Common myeloid progenitor, CD34-positive (primary cell): ENCODE measurements at regions of chr5 and their contacts with region 1.

Region 1: DNA sequence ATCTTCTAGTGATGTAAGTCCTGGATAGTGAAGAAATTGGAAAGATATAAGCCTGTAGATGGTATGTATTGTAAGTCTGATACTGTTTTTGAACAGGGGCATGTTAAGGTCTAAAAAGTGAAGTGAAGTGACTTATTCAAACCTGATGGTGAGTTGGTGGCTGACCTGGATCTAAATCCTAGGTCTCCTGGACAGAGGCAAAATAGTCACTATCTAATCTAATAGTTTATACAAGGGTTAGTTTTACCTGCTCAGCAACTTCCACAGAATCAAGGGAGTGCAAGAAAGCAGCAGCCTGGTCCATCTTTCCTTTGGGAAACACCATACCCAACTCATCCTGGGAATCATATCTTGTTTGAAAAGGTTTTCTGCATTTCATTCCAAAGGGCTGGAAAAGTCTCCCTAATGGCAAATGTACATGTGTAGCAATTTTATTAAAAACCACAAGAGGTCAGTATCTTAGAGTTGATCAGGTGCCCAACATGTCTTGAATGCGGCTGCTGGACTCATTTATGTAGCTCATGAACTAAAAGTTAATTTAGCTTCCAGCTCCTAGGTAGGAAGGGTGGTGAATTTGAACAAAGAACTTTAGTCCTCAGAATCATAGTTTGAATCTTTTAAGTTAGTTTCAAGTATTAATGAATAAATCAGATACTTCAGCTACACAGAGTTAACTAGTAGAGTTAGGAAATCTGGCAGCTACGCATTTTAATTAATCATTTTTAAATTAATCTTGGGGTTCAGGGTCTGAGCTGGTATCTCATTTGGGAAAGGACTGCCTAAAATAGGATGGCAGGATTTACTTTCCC is 26.0 kb downstream of the SKP2 start:
- DNase-seq: peak; percentile 22 to 49 (median 40)
- H3K4me3 ChIP-seq: no peak overlapping the region
- H3K27ac ChIP-seq: no peak overlapping the region
- H3K4me1 ChIP-seq: no peaks in the 10 kb centered on the region
- H3K27me3 ChIP-seq: no peaks in the 10 kb centered on the region

Region 2: GRCh38 chr5:35850967-35851692 is 326.8 kb before region 1 on chr5:
- CTCF ChIA-PET with region 1: no interaction called
- POLR2A ChIA-PET with region 1: no interaction called
- DNase-seq: no peak
- H3K4me3 ChIP-seq: no peak overlapping the region
- H3K27ac ChIP-seq: no peak overlapping the region
- H3K4me1 ChIP-seq: no peaks in the 10 kb centered on the region
- H3K27me3 ChIP-seq: no peaks in the 10 kb centered on the region

Region 3: DNA sequence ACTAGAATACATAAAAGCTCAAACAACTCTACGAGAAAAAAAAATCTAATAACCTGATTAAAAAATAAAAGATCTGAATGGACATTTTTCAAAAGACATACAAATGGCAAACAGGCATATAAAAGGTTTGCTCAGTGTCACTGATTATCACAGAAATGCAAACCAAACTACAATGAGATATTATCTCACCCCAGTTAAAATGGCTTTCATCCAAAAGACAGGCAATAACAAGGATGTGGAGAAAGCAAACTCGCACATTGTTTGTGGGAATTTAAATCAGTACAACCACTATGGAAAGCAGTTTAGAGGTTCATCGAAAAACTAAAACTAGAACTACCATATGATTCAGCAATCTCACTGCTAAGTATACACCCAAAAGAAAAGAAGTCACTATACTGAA is 132.0 kb before region 1 on chr5:
- CTCF ChIA-PET with region 1: no interaction called
- POLR2A ChIA-PET with region 1: no interaction called
- DNase-seq: no peak
- H3K4me3 ChIP-seq: no peak overlapping the region
- H3K27ac ChIP-seq: no peak overlapping the region
- H3K4me1 ChIP-seq: no peaks in the 10 kb centered on the region
- H3K27me3 ChIP-seq: no peaks in the 10 kb centered on the region

Region 4: DNA sequence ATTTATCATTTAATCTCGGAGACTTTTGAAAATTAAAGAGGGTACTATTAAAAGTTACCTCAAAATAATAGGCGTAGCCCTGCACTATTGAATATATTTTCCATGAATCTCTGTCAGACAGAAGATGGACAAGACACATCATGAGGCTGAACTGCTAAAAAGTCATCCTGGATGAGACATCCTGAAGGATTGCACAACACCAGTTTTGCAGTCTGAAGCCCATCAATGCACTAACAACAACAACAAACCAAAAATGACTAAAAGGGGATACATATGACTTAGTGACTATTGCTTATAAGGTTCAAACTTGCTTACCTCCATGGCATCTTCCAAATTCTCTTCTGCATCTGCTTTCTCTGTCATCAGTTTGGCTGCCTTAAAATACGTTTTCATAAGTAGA is 41.9 kb before region 1 on chr5:
- CTCF ChIA-PET with region 1: no interaction called
- POLR2A ChIA-PET with region 1: no interaction called
- DNase-seq: no peak
- H3K4me3 ChIP-seq: no peak overlapping the region
- H3K27ac ChIP-seq: no peak overlapping the region
- H3K4me1 ChIP-seq: no peaks in the 10 kb centered on the region
- H3K27me3 ChIP-seq: no peaks in the 10 kb centered on the region

Region 5: GRCh38 chr5:36305571-36306326 is 127.8 kb after region 1 on chr5:
- CTCF ChIA-PET with region 1: interaction called, 10 read pairs
- POLR2A ChIA-PET with region 1: no interaction called
- DNase-seq: peak; percentile 60 to 72 (median 67)
- H3K4me3 ChIP-seq: no peak overlapping the region
- H3K27ac ChIP-seq: no peak overlapping the region
- H3K4me1 ChIP-seq: peaks cover 0 to 26% (median 4%) of the 10 kb centered on the region in 4 experiments
- H3K27me3 ChIP-seq: no peaks in the 10 kb centered on the region

Region 6: DNA sequence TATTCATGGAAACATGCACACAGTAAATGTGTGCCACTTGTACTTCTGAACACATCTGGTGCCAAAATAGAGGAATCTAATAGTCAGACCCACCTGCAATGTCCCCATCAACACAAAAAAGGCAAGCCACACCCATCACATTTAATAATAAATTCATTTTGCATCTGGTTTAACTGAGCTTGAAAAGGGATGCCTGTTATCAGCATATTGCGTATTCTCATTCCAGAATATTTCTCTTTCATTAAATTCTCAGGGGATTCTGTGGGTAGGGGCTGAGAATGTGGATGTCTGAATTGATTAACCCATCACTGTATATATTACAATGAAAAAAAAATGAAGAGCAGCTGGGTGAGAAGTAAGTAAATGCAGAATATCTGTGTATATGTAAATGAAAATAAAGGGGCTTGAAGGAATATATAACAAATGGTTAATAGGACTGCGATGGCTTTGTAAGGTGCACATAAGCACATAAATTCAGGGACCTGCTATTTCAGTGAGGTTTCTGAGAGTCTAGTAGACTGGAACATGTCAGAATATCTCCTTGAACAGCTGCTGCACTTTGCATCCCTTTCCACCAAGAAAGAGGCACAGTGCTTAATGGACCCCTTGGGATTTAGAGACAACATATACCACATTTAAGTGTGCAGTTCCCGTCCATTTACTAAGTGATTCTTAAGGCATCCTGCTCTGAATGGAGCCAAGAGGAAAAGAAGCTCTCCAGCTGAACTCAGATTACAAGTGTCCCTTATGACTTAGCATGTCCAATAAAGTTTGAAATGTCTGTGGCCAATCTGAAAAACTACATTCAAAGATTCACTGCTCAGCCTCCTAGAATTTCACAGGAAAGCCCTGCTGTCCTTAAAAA is 594.6 kb after region 1 on chr5:
- CTCF ChIA-PET with region 1: no interaction called
- POLR2A ChIA-PET with region 1: no interaction called
- DNase-seq: no peak
- H3K4me3 ChIP-seq: no peak overlapping the region
- H3K27ac ChIP-seq: no peak overlapping the region
- H3K4me1 ChIP-seq: no peaks in the 10 kb centered on the region
- H3K27me3 ChIP-seq: no peaks in the 10 kb centered on the region